AG04449 (cell line): ENCODE measurements at regions of chr12 and their contacts with region 1.

Region 1: DNA sequence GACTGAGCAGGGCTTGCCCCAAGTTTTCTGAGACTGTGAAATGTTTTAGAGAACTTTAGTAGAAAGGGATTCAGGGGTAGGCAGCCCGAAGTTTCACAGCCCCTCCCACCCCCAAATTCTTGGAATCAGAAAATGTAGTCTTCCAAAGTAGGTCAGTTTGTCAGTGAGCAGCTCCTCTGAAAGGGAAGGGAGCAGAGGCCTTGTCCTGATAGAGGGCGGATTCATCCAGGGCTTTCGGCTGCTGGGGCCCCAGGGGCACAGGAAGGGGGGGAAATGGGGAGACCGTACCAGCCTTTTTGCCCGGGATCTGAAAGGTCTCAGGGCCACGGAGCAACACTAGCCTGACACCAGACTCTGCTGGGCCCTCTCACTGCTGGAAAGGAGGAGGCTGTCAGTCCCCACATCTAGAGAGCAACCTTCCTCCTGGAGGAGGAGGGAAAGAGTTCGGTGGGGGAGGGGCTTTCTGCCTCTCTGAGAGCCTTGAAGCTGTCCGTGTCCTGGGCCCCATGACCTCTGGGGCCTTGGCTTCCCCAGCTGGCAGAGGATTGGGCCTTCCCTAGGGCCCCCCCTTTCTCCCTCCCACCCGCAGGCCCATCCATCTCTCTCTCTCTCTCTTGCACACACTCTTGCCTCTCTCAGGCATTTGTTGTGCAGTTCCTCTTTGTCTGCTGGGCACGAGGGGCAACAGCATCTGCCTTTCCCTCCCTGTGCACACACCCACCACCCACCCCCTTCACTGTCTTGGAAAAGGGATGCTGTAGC is at the start of gene IKZF4:
- DNase-seq: no peak
- H3K4me3 ChIP-seq: peak within 1 kb of the TSS; percentile 49
- CTCF ChIP-seq: no peak

Region 2: DNA sequence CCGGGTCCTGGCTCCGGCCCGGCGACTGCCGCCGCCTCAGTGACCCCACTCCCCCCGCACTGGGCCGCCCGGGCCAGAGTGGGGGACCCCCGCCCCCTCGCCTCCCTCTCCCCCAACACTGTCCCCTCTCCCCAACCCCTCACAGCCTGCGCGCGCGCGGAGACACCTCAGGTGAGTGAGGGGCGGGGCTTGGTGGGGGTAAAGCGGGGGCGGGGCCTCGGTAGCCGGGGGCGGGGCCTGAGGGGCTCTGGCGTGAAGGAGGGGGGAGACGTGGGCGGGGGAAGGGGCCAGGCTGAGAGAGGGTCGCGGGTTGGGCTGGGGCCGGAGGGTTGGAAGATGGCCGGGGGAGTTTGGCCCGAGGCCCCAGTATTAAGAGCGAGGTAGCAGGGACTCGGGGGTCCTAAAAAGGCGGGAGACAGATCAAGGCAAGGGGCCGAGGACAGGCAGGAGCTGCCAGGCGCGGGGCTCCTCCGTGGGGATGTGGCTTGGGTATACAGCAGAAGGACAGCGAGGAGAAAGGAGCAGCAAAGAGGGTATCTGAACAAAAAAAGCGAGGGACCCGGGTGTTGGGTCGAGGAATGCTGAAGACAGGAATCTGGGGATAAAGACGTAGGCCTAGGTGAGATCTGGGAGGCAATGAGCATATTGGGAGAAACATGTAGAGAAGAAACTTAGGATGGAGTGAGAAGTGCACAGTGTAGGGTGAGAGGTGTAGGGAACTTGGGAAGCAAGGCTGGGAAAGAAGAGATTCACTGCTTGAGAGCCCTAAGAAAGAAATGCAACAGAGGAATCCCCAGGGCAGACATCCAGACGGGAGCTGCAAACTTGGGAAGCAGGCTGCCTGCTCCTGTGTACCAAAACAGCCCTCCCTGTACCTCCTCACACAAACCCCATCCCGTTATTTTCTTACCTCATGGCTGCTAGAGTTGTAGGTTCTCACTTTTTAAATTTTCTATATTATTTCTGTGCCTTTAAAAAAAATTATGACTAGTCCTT is 12.7 kb before region 1 on chr12:
- CTCF ChIA-PET with region 1: interaction called, 103 read pairs
- POLR2A ChIA-PET with region 1: interaction called, 4 read pairs
- DNase-seq: no peak
- H3K4me3 ChIP-seq: peak overlapping the region; percentile 69
- CTCF ChIP-seq: no peak